PC-9 (cell line): ENCODE measurements at regions of chr3 and their contacts with region 1.

Region 1: GRCh38 chr3:125154800-125155269 is 57.7 kb downstream of the SLC12A8 start:
- DNase-seq: no peak
- H3K4me3 ChIP-seq: no peak overlapping the region
- H3K27ac ChIP-seq: no peak overlapping the region
- H3K4me1 ChIP-seq: no peaks in the 10 kb centered on the region
- H3K27me3 ChIP-seq: no peaks in the 10 kb centered on the region
- CTCF ChIP-seq: no peak

Region 2: GRCh38 chr3:125062888-125063618 is 91.8 kb before region 1 on chr3:
- CTCF ChIA-PET with region 1: no interaction called
- POLR2A ChIA-PET with region 1: no interaction called
- intact Hi-C with region 1: no loop called
- DNase-seq: peak; percentile 95 to 99
- H3K4me3 ChIP-seq: peak overlapping the region; percentile 8; the same call in 1 of the 2 replicates
- H3K27ac ChIP-seq: peak overlapping the region; percentile 65
- H3K4me1 ChIP-seq: peaks cover 64% of the 10 kb centered on the region
- H3K27me3 ChIP-seq: no peaks in the 10 kb centered on the region
- CTCF ChIP-seq: no peak

Region 3: GRCh38 chr3:125087768-125088391 is 67.0 kb before region 1 on chr3:
- CTCF ChIA-PET with region 1: no interaction called
- POLR2A ChIA-PET with region 1: no interaction called
- intact Hi-C with region 1: no loop called
- DNase-seq: no peak
- H3K4me3 ChIP-seq: no peak overlapping the region
- H3K27ac ChIP-seq: no peak overlapping the region
- H3K4me1 ChIP-seq: no peaks in the 10 kb centered on the region
- H3K27me3 ChIP-seq: no peaks in the 10 kb centered on the region
- CTCF ChIP-seq: no peak

Region 4: DNA sequence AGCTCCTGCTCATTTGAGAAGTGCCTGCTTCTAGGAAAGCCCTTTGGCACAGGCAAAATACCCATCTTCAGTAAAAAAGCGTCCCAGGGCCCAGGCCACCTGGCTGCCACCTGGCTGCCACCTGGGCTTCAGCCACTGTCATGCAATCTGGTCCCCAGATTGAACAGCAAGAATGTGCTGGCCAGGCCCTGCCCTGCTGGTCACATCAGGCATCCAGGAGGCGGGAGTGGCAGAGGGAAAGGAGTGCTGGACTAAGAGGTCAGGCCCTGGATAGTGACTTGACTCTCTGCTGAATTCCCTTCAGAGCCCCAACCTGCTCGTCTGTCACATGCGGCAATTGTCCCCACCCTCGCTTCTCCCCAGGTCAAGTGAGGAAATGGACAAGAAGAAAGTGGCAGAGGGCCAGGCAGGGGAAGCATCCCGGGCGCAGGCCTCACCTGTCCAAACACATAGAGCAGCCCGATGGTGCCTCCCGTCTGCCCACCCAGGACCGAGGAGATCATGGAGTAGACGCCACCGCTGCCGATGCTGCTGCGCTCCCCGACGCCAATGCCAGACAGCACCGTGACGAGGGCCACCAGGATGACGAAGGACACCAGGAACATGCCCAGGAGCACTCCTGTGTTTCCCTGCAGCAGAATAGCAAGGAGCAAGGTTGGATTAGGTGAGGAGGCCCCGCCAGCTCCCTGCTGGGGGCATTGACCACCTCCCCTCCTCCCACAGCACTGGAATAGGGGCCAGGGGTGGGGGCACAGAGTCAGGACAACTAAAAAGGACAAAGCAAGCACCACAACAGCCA is 32.2 kb after region 1 on chr3:
- CTCF ChIA-PET with region 1: interaction called, 13 read pairs
- POLR2A ChIA-PET with region 1: no interaction called
- intact Hi-C with region 1: no loop called
- DNase-seq: peak in 1 of 2 experiments; percentile 10
- H3K4me3 ChIP-seq: no peak overlapping the region
- H3K27ac ChIP-seq: no peak overlapping the region
- H3K4me1 ChIP-seq: no peaks in the 10 kb centered on the region
- H3K27me3 ChIP-seq: no peaks in the 10 kb centered on the region
- CTCF ChIP-seq: no peak